AG04450 (cell line): ENCODE measurements at regions of chr1 and their contacts with region 1.

Region 1: DNA sequence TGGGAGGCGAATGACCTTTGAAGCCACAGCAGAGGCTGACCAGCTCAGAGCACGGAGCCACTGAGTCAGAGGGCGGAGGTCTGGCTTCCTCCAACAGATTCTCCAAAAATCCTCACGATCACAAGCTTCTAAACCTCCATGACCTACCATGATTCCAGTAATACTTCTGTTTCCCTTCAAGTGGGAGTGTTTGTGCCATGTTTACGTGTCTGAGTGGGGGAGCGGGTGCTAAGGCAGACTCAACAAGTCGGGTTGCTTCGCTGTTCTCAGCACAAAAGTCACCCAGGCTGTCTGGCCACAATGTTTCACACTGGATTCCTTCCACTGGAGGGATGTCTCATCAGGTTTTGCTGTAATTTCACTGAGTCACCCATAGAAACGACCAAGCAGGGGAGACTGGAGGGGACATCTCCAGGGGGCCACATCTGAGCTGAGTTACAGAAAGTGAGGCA is 86.2 kb downstream of the SLC66A1 start:
- DNase-seq: peak; percentile 90
- H3K4me3 ChIP-seq: no peak overlapping the region
- H3K27ac ChIP-seq: peak overlapping the region; percentile 81
- H3K27me3 ChIP-seq: no peaks in the 10 kb centered on the region
- CTCF ChIP-seq: peak; percentile 73

Region 2: DNA sequence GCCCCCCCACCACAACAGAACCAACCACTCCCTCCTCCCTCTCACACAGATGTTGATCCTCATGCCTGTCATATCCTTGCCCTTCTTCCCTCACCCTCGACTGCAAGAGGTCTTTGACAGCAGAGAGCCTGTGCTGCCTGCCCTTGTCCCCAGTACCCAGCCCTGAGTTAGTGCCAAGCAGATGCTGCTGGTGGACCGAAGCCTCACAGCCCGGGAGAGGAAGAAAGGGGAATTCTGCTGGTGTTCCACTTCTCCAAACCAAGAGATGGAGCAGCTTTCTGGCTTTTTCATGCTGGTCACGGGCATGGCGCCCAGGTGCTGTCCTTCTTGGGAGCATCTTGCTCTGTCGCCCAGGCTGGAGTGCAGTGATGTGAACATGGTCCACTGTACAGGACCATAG is 17.1 kb before region 1 on chr1:
- CTCF ChIA-PET with region 1: no interaction called
- POLR2A ChIA-PET with region 1: no interaction called
- DNase-seq: no peak
- H3K4me3 ChIP-seq: no peak overlapping the region
- H3K27ac ChIP-seq: no peak overlapping the region
- H3K27me3 ChIP-seq: no peaks in the 10 kb centered on the region
- CTCF ChIP-seq: no peak

Region 3: GRCh38 chr1:19563324-19564097 is 165.2 kb after region 1 on chr1:
- CTCF ChIA-PET with region 1: interaction called, 13 read pairs
- POLR2A ChIA-PET with region 1: no interaction called
- DNase-seq: peak; percentile 13
- H3K4me3 ChIP-seq: peak overlapping the region; percentile 35
- H3K27ac ChIP-seq: peak overlapping the region; percentile 73
- H3K27me3 ChIP-seq: no peaks in the 10 kb centered on the region
- CTCF ChIP-seq: no peak